Endothelial cell of umbilical vein (primary cell): ENCODE measurements at regions of chr10 and their contacts with region 1.

Region 1: GRCh38 chr10:117537436-117537903 is 5.1 kb upstream of the EMX2 start:
- DNase-seq: no peak
- H3K4me3 ChIP-seq: no peak overlapping the region
- H3K27ac ChIP-seq: no peak overlapping the region
- H3K4me1 ChIP-seq: peaks cover 2% of the 10 kb centered on the region
- H3K27me3 ChIP-seq: peaks cover 85 to 95% of the 10 kb centered on the region in 2 experiments
- CTCF ChIP-seq: peak; percentile 57 to 81
- POLR2A ChIP-seq: no peak

Region 2: GRCh38 chr10:118046395-118047156 is 509.1 kb after region 1 on chr10 and contains the start of gene RAB11FIP2:
- CTCF ChIA-PET with region 1: no interaction called
- POLR2A ChIA-PET with region 1: no interaction called
- dilution Hi-C with region 1: no loop called
- intact Hi-C with region 1: loop called (anchors 2 kb)
- DNase-seq: peak; percentile 86
- H3K4me3 ChIP-seq: peak within 1 kb of the TSS; percentile 49 to 88 (median 79)
- H3K27ac ChIP-seq: peak within 1 kb of the TSS; percentile 47
- H3K4me1 ChIP-seq: peaks cover 31% of the 10 kb centered on the region
- H3K27me3 ChIP-seq: no peaks in the 10 kb centered on the region
- CTCF ChIP-seq: peak in 1 of 2 donors; percentile 11
- POLR2A ChIP-seq: peak; percentile 34
- total RNA-seq, gene RAB11FIP2: 8.6 and 12.6 TPM in 2 replicates

Region 3: GRCh38 chr10:118241229-118242137 is 704.0 kb after region 1 on chr10:
- CTCF ChIA-PET with region 1: interaction called, 94 read pairs
- POLR2A ChIA-PET with region 1: no interaction called
- dilution Hi-C with region 1: no loop called
- intact Hi-C with region 1: loop called (anchors 1 kb)
- DNase-seq: peak; percentile 74
- H3K4me3 ChIP-seq: no peak overlapping the region
- H3K27ac ChIP-seq: no peak overlapping the region
- H3K4me1 ChIP-seq: no peaks in the 10 kb centered on the region
- H3K27me3 ChIP-seq: peaks cover 7 to 12% of the 10 kb centered on the region in 2 experiments
- CTCF ChIP-seq: peak; percentile 81 to 88
- POLR2A ChIP-seq: no peak

Region 4: DNA sequence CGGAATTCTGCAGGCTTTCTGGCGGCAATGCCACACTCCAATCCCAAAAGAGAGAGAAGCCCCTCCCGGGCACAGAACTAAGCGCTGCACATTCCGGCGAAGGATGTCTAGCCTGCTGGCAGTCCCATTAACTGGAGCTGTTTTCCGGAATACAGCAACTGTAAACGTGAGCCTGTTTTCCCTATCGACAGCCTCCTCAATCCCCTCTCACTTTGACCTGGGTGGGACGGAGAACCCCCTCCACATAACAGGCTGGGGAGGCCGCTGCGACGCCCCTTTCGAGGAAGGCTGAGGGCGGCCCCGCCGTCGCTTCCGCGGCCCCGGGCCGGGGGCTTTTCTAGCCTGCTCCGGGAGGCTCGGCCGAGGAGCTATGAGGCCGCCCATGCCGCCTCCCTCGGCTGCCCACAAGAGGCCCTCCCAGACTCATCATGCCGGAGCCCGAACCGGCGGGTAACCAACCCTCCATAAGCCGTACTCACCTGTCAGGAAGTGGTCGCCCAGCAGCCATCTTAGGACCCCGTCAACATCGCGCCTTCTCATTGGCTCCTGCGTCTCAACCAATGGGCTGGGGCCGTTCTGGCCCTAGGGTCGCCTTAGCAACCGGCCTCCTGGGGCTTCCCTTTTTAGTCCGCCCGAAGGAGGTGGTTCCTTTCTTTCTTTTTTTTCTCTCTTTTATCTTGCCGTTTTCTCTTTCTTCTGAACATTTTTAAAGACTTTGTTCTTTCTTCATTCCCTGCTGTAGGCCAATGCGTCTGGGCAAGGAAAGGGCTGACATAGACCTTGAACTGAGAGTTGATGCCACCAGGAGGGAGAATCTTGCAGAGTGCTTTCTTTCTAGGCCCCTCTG is 804.5 kb after region 1 on chr10 and contains the start of gene FAM204A:
- CTCF ChIA-PET with region 1: no interaction called
- POLR2A ChIA-PET with region 1: no interaction called
- dilution Hi-C with region 1: no loop called
- intact Hi-C with region 1: loop called (anchors 5 kb)
- DNase-seq: peak; percentile 96
- H3K4me3 ChIP-seq: peak within 1 kb of the TSS; percentile 72 to 95 (median 91)
- H3K27ac ChIP-seq: peak within 1 kb of the TSS; percentile 11
- H3K4me1 ChIP-seq: peaks cover 13% of the 10 kb centered on the region
- H3K27me3 ChIP-seq: peaks cover 0 to 2% of the 10 kb centered on the region in 2 experiments
- CTCF ChIP-seq: no peak
- POLR2A ChIP-seq: peak; percentile 84
- total RNA-seq, gene FAM204A: 68.7 and 73.7 TPM in 2 replicates

Region 5: GRCh38 chr10:118459726-118460193 is 922.3 kb after region 1 on chr10:
- CTCF ChIA-PET with region 1: interaction called, 28 read pairs
- POLR2A ChIA-PET with region 1: no interaction called
- dilution Hi-C with region 1: no loop called
- intact Hi-C with region 1: loop called (anchors 2 kb)
- DNase-seq: peak; percentile 68
- H3K4me3 ChIP-seq: no peak overlapping the region
- H3K27ac ChIP-seq: no peak overlapping the region
- H3K4me1 ChIP-seq: no peaks in the 10 kb centered on the region
- H3K27me3 ChIP-seq: no peaks in the 10 kb centered on the region
- CTCF ChIP-seq: peak; percentile 67 to 80
- POLR2A ChIP-seq: no peak